ENCODE measurements at regions of chr1 and their contacts with region 1.

Region 1: GRCh38 chr1:209692745-209693504 is 11.7 kb upstream of the HSD11B1 start:
- DNase-seq: peak; percentile 59 to 66
- H3K4me3 ChIP-seq: no peak overlapping the region
- H3K27ac ChIP-seq: no peak overlapping the region
- H3K4me1 ChIP-seq: 0 out of 2 replicates have a peak, but pooled peaks cover 4% of the 10 kb centered on the region
- H3K27me3 ChIP-seq: no peaks in the 10 kb centered on the region
- CTCF ChIP-seq: peak; percentile 96

Region 2: DNA sequence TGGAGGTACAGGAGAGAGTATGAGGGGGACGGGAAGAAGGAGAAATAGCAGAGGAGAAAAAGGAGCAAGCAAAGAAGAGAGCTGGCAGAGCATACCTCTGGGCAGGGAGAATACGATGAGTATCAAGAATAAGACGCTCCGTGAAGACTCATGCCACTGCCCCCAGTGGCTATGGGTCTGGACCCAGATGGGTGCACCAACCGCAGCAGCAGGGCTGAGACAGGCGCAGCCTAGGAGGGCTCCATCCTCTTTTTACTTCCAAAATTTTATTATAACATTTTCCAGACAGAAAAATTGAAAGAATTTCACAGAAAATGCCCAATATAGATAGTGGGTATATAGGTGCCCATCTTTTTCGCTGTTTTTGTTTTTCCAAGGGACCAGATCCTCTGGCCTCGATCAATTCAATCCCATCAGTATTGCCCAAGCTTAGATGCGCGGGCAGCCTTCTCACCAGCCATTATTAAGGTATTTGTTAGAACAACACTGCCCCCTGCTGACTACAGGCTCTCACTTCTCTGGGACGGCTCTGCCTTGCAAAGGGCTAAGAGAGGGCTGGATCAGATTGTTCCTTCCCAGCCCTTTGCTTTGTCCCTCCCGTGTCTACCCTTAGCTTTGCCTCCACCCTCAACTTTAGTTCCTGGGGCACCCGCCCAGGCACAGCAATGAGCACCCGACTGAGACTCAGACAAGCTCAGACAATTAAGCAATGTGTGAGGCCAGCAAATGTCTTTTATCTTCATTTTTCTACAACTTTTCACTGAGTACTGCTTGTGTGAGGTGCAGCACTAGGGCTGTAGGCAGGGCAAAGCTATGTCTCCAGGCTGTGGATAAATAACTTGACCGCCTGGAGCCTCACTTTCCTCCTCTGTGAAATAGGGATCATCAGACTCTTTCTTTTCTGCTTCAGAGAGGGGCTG is 126.9 kb before region 1 on chr1:
- CTCF ChIA-PET with region 1: no interaction called
- POLR2A ChIA-PET with region 1: no interaction called
- intact Hi-C with region 1: loop called (anchors 1 kb)
- DNase-seq: peak; percentile 53 to 65
- H3K4me3 ChIP-seq: no peak overlapping the region
- H3K27ac ChIP-seq: no peak overlapping the region
- H3K4me1 ChIP-seq: no peaks in the 10 kb centered on the region
- H3K27me3 ChIP-seq: peaks cover 7% of the 10 kb centered on the region; the same call in 1 of the 2 replicates
- CTCF ChIP-seq: peak; percentile 90

Region 3: GRCh38 chr1:209576798-209577197 is 116.1 kb before region 1 on chr1:
- CTCF ChIA-PET with region 1: no interaction called
- POLR2A ChIA-PET with region 1: no interaction called
- intact Hi-C with region 1: loop called (anchors 1 kb)
- DNase-seq: peak; percentile 52 to 80
- H3K4me3 ChIP-seq: no peak overlapping the region
- H3K27ac ChIP-seq: no peak overlapping the region
- H3K4me1 ChIP-seq: no peaks in the 10 kb centered on the region
- H3K27me3 ChIP-seq: peaks cover 25% of the 10 kb centered on the region; the same call in 1 of the 2 replicates
- CTCF ChIP-seq: peak; percentile 89

Region 4: GRCh38 chr1:209601809-209602657 is 90.9 kb before region 1 on chr1:
- CTCF ChIA-PET with region 1: no interaction called
- POLR2A ChIA-PET with region 1: no interaction called
- intact Hi-C with region 1: loop called (anchors 1 kb)
- DNase-seq: peak; percentile 41
- H3K4me3 ChIP-seq: no peak overlapping the region
- H3K27ac ChIP-seq: no peak overlapping the region
- H3K4me1 ChIP-seq: peaks cover 1% of the 10 kb centered on the region; the same call in 1 of the 2 replicates
- H3K27me3 ChIP-seq: no peaks in the 10 kb centered on the region; the same call in 1 of the 2 replicates
- CTCF ChIP-seq: peak; percentile 75

Region 5: DNA sequence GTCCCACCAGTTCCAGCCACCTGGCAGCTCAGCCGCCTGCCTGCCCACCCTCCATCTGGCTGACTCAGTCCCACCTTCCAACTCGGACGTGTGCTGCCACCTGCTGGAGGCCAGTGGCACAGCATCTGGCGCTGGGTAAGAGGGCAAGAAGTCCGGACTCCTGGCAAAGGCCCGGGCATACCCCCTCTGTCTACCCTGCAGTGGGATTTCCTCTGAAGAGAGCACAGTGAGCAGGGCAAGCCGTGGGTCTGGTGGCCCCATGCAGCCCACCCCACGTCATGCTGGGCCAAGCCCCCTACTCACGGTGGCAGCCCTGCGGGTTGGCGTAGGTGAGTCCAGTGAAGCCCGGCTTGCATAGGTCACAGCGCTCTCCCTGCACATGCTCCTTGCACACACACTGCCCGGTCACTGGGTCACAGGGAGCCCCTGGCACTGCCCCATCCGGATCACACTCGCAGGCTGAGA is 65.2 kb before region 1 on chr1:
- CTCF ChIA-PET with region 1: interaction called, 3 read pairs
- POLR2A ChIA-PET with region 1: no interaction called
- intact Hi-C with region 1: loop called (anchors 2 kb)
- DNase-seq: peak; percentile 45 to 53
- H3K4me3 ChIP-seq: no peak overlapping the region
- H3K27ac ChIP-seq: no peak overlapping the region
- H3K4me1 ChIP-seq: no peaks in the 10 kb centered on the region
- H3K27me3 ChIP-seq: no peaks in the 10 kb centered on the region
- CTCF ChIP-seq: peak; percentile 93

Region 6: DNA sequence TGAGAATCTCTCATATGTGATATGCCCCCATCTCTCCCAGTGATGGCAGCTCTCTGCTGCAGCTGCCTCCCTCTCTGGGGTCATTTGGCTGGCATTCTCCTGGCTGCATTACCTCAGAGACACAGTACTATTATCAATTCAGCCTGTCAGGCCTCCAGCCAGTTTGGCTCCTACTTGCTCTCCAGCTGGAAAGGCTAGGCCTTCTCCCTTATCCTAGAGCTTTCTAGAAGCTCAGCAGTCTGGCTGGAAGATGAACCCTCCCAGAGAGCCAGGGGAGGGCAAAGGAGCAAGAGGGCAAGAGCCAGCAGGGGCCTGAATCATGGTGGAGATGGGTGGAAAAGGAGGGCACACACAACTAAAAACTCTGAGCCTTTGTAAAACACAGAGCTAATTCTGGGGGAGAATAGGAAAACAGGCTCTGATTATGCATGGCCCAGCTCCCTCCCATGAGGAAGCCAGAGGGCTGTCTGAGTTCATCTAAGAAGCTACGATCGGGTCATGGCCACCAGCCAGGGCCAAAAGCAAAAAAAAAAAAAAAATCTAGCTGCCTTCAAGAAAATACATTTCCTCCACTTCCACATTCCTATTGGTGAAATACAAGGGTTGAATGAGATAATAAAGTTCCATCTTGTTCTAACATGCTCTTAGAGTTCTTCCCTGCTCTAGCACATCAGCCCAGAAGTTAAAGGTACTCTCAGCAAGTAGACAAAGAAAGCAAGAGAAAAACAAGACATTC is 49.5 kb before region 1 on chr1:
- CTCF ChIA-PET with region 1: interaction called, 4 read pairs
- POLR2A ChIA-PET with region 1: no interaction called
- intact Hi-C with region 1: loop called (anchors 1 kb)
- DNase-seq: no peak
- H3K4me3 ChIP-seq: no peak overlapping the region
- H3K27ac ChIP-seq: no peak overlapping the region
- H3K4me1 ChIP-seq: peaks cover 19% of the 10 kb centered on the region
- H3K27me3 ChIP-seq: no peaks in the 10 kb centered on the region
- CTCF ChIP-seq: no peak

Region 7: GRCh38 chr1:209733409-209734192 is 40.7 kb after region 1 on chr1:
- CTCF ChIA-PET with region 1: no interaction called
- POLR2A ChIA-PET with region 1: no interaction called
- intact Hi-C with region 1: no loop called
- DNase-seq: no peak
- H3K4me3 ChIP-seq: no peak overlapping the region
- H3K27ac ChIP-seq: no peak overlapping the region
- H3K4me1 ChIP-seq: no peaks in the 10 kb centered on the region
- H3K27me3 ChIP-seq: no peaks in the 10 kb centered on the region
- CTCF ChIP-seq: no peak

Region 8: GRCh38 chr1:209747580-209748262 is 54.8 kb after region 1 on chr1:
- CTCF ChIA-PET with region 1: no interaction called
- POLR2A ChIA-PET with region 1: no interaction called
- intact Hi-C with region 1: loop called (anchors 1 kb)
- DNase-seq: peak; percentile 95 to 97
- H3K4me3 ChIP-seq: no peak overlapping the region
- H3K27ac ChIP-seq: no peak overlapping the region
- H3K4me1 ChIP-seq: no peaks in the 10 kb centered on the region; the same call in 1 of the 2 replicates
- H3K27me3 ChIP-seq: no peaks in the 10 kb centered on the region
- CTCF ChIP-seq: peak; percentile 94

Region 9: GRCh38 chr1:209769171-209769904 is 76.4 kb after region 1 on chr1:
- CTCF ChIA-PET with region 1: no interaction called
- POLR2A ChIA-PET with region 1: no interaction called
- intact Hi-C with region 1: no loop called
- DNase-seq: no peak
- H3K4me3 ChIP-seq: no peak overlapping the region
- H3K27ac ChIP-seq: no peak overlapping the region
- H3K4me1 ChIP-seq: no peaks in the 10 kb centered on the region
- H3K27me3 ChIP-seq: no peaks in the 10 kb centered on the region
- CTCF ChIP-seq: no peak

Region 10: GRCh38 chr1:209784265-209785169 is 91.6 kb after region 1 on chr1 and contains the start of gene C1orf74:
- CTCF ChIA-PET with region 1: no interaction called
- POLR2A ChIA-PET with region 1: no interaction called
- intact Hi-C with region 1: no loop called
- DNase-seq: peak; percentile 94 to 98
- H3K4me3 ChIP-seq: peak within 1 kb of the TSS; percentile 92
- H3K27ac ChIP-seq: peak within 1 kb of the TSS; percentile 85
- H3K4me1 ChIP-seq: peaks cover 22% of the 10 kb centered on the region
- H3K27me3 ChIP-seq: no peaks in the 10 kb centered on the region
- CTCF ChIP-seq: no peak
- total RNA-seq, gene C1orf74: 4.1 and 5.0 TPM in 2 replicates